ENCODE measurements at regions of chr4 and their contacts with region 1.

Region 1: GRCh38 chr4:74675673-74676279 is 118.5 kb downstream of the BTC start:
- DNase-seq: no peak
- H3K4me3 ChIP-seq: no peak overlapping the region
- H3K27ac ChIP-seq: no peak overlapping the region
- H3K4me1 ChIP-seq: no peaks in the 10 kb centered on the region
- H3K27me3 ChIP-seq: no peaks in the 10 kb centered on the region
- CTCF ChIP-seq: peak in 1 of 3 donors; percentile 46
- EP300 ChIP-seq: no peak
- POLR2A ChIP-seq: no peak

Region 2: DNA sequence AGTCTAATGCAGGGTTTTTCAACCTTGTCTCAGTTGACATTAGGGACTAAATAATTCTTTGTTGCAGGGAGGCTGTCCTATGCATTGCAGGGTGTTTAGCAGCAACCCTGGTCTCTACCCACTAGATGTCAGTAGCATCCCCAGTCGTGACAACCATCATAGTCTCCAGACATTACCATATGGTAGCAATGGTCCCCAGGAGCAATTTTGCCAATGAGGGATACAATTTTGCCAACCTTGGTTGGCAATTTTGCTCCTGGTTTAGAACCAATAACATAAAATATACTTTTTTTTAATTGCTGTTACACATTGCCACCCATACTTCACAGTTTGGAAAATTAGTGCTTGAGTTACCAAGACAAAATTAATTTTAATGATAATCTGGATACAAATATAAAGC is 304.9 kb before region 1 on chr4:
- intact Hi-C with region 1: loop called in 2 of 4 experiments (anchors 10 kb)
- DNase-seq: no peak
- H3K4me3 ChIP-seq: no peak overlapping the region
- H3K27ac ChIP-seq: no peak overlapping the region
- H3K4me1 ChIP-seq: no peaks in the 10 kb centered on the region
- H3K27me3 ChIP-seq: no peaks in the 10 kb centered on the region
- CTCF ChIP-seq: no peak
- EP300 ChIP-seq: no peak
- POLR2A ChIP-seq: no peak